ENCODE measurements at regions of chr22 and their contacts with region 1.

Region 1: GRCh38 chr22:30606455-30607299 is at the start of gene TCN2:
- H3K4me3 ChIP-seq: peak within 1 kb of the TSS; percentile 21
- H3K27ac ChIP-seq: no peak within 1 kb of the TSS; the same call in 1 of the 2 replicates
- H3K4me1 ChIP-seq: no peaks in the 10 kb centered on the region
- CTCF ChIP-seq: no peak

Region 2: DNA sequence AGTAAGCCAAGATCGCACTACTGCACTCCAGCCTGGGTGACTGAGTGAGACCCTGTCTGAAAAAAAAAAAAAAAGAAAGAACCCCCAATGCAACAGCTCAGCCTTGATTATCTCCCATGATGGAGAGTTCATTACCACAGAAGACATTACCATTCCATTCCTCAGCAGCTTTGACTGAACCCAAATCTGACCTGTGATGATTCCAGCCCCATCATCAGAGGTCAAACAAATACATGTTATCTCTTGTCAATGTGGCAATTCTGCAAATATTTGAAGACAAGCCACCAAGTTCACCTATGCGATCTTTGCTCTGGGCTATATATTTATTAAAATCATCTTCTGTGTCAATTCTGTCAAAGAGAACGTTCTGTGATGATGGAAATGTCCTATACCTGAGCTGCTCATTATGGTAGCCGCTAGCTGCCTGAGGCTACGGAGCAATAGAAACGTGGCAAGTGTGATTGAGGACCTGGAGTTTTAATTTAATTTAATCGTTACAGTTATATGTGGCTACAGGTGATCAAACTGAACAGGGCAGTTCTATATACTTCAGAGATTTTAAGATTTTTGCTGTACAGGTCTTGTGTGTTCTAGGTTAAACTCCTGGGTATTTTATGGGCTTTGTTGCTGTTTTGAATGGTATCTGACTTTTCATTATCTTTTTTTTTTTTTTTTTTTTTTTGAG is 109.1 kb before region 1 on chr22:
- CTCF ChIA-PET with region 1: no interaction called
- POLR2A ChIA-PET with region 1: no interaction called
- H3K4me3 ChIP-seq: no peak overlapping the region
- H3K27ac ChIP-seq: no peak overlapping the region
- H3K4me1 ChIP-seq: no peaks in the 10 kb centered on the region
- CTCF ChIP-seq: no peak

Region 3: GRCh38 chr22:30591588-30592359 is 14.9 kb before region 1 on chr22 and contains the start of gene PES1:
- CTCF ChIA-PET with region 1: interaction called, 12 read pairs
- POLR2A ChIA-PET with region 1: no interaction called
- H3K4me3 ChIP-seq: peak within 1 kb of the TSS; percentile 79
- H3K27ac ChIP-seq: peak within 1 kb of the TSS; percentile 80
- H3K4me1 ChIP-seq: peaks cover 8% of the 10 kb centered on the region; the same call in 1 of the 2 replicates
- CTCF ChIP-seq: no peak

Region 4: GRCh38 chr22:30643055-30643875 is 36.6 kb after region 1 on chr22:
- CTCF ChIA-PET with region 1: no interaction called
- POLR2A ChIA-PET with region 1: interaction called, 10 read pairs
- H3K4me3 ChIP-seq: no peak overlapping the region
- H3K27ac ChIP-seq: no peak overlapping the region
- H3K4me1 ChIP-seq: no peaks in the 10 kb centered on the region
- CTCF ChIP-seq: no peak

Region 5: DNA sequence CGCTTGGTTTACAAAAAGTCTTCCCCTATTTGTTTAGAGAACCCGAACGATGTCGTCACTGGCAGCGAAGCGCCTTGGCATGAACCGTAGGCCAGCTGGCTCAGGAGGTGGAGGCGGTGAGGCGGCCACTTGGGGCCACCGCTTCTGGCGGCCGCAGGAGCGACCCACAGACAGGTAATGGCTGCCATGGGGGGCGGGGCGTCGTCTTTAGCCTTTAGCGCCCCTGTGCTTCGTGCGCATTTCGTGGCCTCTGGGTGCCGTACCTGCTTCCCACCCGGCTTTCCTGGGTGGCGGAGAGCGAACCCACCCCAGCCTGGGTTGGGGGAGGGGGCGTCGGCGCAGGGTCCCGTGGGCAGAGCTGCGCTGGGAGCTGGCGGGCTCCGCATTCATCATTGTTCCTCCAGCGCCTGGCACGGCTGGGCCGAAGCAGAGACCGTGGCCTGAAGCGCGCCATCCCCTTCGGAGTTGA is 87.5 kb after region 1 on chr22:
- CTCF ChIA-PET with region 1: no interaction called
- POLR2A ChIA-PET with region 1: no interaction called
- H3K4me3 ChIP-seq: peak overlapping the region; percentile 73
- H3K27ac ChIP-seq: peak overlapping the region; percentile 83; the same call in 1 of the 2 replicates
- H3K4me1 ChIP-seq: peaks cover 4% of the 10 kb centered on the region; the same call in 1 of the 2 replicates
- CTCF ChIP-seq: peak; percentile 79